PC-3 (cell line): ENCODE measurements at regions of chr1 and their contacts with region 1.

Region 1: DNA sequence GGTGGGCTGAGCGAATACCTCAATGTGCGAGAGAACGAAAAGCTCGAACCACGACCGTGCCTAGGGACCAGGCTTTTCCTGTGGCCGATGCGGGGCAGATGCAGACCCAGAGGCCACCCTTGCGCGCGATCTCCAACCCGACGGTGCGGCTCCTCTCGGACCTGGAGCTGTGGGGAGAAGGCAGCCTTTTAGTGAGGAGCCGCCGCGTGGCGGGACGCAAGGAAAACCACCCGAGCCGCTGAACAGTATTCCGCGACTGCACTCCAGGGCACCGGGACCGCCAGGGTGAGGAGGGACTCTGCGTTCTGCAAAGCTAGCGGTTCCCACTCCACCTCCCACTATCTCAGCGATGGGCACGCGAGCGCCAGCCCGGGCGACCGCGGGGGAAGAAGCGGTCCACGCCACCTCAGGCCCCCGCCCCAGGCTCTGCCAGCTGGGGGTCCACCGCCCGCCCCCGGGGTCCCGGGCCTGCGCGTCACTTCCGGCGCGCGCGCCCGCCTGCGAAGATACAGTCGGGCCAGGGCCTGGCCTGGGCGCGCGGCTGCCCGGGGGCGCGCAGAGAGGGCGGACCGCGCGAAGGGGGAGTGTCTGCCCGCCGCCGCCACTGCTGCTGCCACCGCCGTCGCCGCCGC is 66.5 kb upstream of the PRKACB start:
- DNase-seq: peak; percentile 69
- ATAC-seq: peak; percentile 88
- H3K4me3 ChIP-seq: peak overlapping the region; percentile 87
- H3K27ac ChIP-seq: peak overlapping the region; percentile 12; the same call in 1 of the 2 replicates
- H3K4me1 ChIP-seq: peaks cover 11% of the 10 kb centered on the region; the same call in 1 of the 2 replicates
- H3K27me3 ChIP-seq: no peaks in the 10 kb centered on the region
- CTCF ChIP-seq: no peak

Region 2: GRCh38 chr1:83998498-83999315 is 78.9 kb before region 1 on chr1 and contains the start of gene TTLL7:
- CTCF ChIA-PET with region 1: no interaction called
- POLR2A ChIA-PET with region 1: no interaction called
- intact Hi-C with region 1: loop called (anchors 1 kb)
- DNase-seq: peak; percentile 65
- ATAC-seq: peak; percentile 85
- H3K4me3 ChIP-seq: peak within 1 kb of the TSS; percentile 91
- H3K27ac ChIP-seq: peak within 1 kb of the TSS; percentile 66
- H3K4me1 ChIP-seq: peaks cover 16% of the 10 kb centered on the region
- H3K27me3 ChIP-seq: no peaks in the 10 kb centered on the region
- CTCF ChIP-seq: no peak
- total RNA-seq, gene TTLL7: 3.8 and 6.8 TPM in 2 replicates

Region 3: GRCh38 chr1:84060781-84061180 is 16.8 kb before region 1 on chr1:
- CTCF ChIA-PET with region 1: no interaction called
- POLR2A ChIA-PET with region 1: interaction called, 44 read pairs
- intact Hi-C with region 1: no loop called
- DNase-seq: no peak
- ATAC-seq: no peak
- H3K4me3 ChIP-seq: no peak overlapping the region
- H3K27ac ChIP-seq: no peak overlapping the region
- H3K4me1 ChIP-seq: no peaks in the 10 kb centered on the region
- H3K27me3 ChIP-seq: no peaks in the 10 kb centered on the region
- CTCF ChIP-seq: no peak